Colonic mucosa (tissue), 4 donors: ENCODE measurements at regions of chr9 and their contacts with region 1.

Region 1: GRCh38 chr9:133532937-133533668 is 1.4 kb upstream of the ADAMTSL2 start:
- DNase-seq: peak; percentile 84
- H3K4me3 ChIP-seq: no peak overlapping the region
- H3K27ac ChIP-seq: no peak overlapping the region
- H3K4me1 ChIP-seq: peaks cover 12% of the 10 kb centered on the region
- H3K27me3 ChIP-seq: peaks cover 19% of the 10 kb centered on the region
- CTCF ChIP-seq: no peak

Region 2: GRCh38 chr9:133726401-133727276 is 193.5 kb after region 1 on chr9:
- intact Hi-C with region 1: loop called (anchors 5 kb)
- DNase-seq: peak; percentile 46
- H3K4me3 ChIP-seq: no peak overlapping the region
- H3K27ac ChIP-seq: no peak overlapping the region
- H3K4me1 ChIP-seq: no peaks in the 10 kb centered on the region
- H3K27me3 ChIP-seq: no peaks in the 10 kb centered on the region
- CTCF ChIP-seq: peak; percentile 45